H1 (cell line): ENCODE measurements at regions of chr2 and their contacts with region 1.

Region 1: GRCh38 chr2:174717273-174717672 is 47.0 kb downstream of the CHRNA1 start:
- DNase-seq: no peak
- H3K4me3 ChIP-seq: no peak overlapping the region
- H3K27ac ChIP-seq: no peak overlapping the region
- H3K4me1 ChIP-seq: no peaks in the 10 kb centered on the region
- H3K27me3 ChIP-seq: no peaks in the 10 kb centered on the region
- CTCF ChIP-seq: no peak
- EP300 ChIP-seq: no peak
- POLR2A ChIP-seq: no peak
- RAD21 ChIP-seq: no peak

Region 2: DNA sequence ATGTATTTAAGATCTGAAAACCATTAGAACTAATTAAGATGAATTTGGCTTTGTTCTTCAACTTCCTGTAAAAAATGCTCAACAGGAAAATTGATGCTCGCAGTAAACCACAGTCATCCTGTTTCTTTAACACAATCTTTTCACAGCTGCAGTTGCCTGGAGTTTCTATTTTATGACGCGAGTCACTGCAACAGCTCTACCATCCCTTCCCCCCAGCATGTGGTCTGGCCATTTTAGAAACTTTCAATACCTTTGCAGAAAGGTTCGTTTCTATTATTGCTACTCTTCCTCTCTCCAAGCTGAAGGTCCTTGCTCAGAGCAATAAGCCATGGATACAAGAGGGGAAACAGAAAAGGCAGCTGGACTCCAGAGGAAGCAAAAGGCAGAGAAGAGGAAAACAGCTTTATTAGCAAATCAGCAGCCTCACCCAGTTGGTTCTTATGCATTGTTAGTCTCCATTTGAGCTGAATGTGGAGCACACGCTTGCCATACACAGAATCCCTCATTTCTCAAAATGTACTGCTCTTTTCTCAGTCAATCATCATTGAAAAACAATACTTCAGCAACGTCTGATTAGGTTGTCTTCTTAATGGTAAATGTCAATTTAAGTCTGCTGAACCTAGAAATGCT is 123.6 kb before region 1 on chr2:
- CTCF ChIA-PET with region 1: no interaction called
- POLR2A ChIA-PET with region 1: no interaction called
- DNase-seq: no peak
- H3K4me3 ChIP-seq: no peak overlapping the region
- H3K27ac ChIP-seq: no peak overlapping the region; the same call in 1 of the 2 replicates
- H3K4me1 ChIP-seq: peaks cover 0 to 5% (median 4%) of the 10 kb centered on the region in 4 experiments; a peak in 3 of 7 replicates
- H3K27me3 ChIP-seq: no peaks in the 10 kb centered on the region
- CTCF ChIP-seq: no peak
- EP300 ChIP-seq: no peak
- POLR2A ChIP-seq: no peak
- RAD21 ChIP-seq: no peak

Region 3: GRCh38 chr2:174688079-174688478 is 29.2 kb before region 1 on chr2:
- CTCF ChIA-PET with region 1: interaction called, 173 read pairs
- POLR2A ChIA-PET with region 1: no interaction called
- DNase-seq: no peak
- H3K4me3 ChIP-seq: no peak overlapping the region
- H3K27ac ChIP-seq: no peak overlapping the region
- H3K4me1 ChIP-seq: peaks cover under 1 to 6% (median 2%) of the 10 kb centered on the region in 4 experiments; a peak in 4 of 7 replicates
- H3K27me3 ChIP-seq: peaks cover 0 to 11% (median 5%) of the 10 kb centered on the region in 4 experiments; a peak in 6 of 7 replicates
- CTCF ChIP-seq: no peak; a peak in 1 of 4 replicates
- EP300 ChIP-seq: no peak
- POLR2A ChIP-seq: no peak
- RAD21 ChIP-seq: no peak; a peak in 1 of 4 replicates